ENCODE measurements at regions of chr6 and their contacts with region 1.

Region 1: GRCh38 chr6:159174263-159174969 is 5.2 kb downstream of the FNDC1 start:
- DNase-seq: peak; percentile 41
- H3K4me3 Mint-ChIP-seq: no peak overlapping the region
- H3K27ac Mint-ChIP-seq: no peak overlapping the region
- H3K4me1 Mint-ChIP-seq: peaks cover 5% of the 10 kb centered on the region
- H3K27me3 Mint-ChIP-seq: peaks cover 65% of the 10 kb centered on the region

Region 2: GRCh38 chr6:159252955-159253508 is 78.6 kb after region 1 on chr6:
- intact Hi-C with region 1: no loop called
- DNase-seq: no peak
- H3K4me3 Mint-ChIP-seq: no peak overlapping the region
- H3K27ac Mint-ChIP-seq: no peak overlapping the region
- H3K4me1 Mint-ChIP-seq: no peaks in the 10 kb centered on the region
- H3K27me3 Mint-ChIP-seq: peaks cover 2% of the 10 kb centered on the region

Region 3: DNA sequence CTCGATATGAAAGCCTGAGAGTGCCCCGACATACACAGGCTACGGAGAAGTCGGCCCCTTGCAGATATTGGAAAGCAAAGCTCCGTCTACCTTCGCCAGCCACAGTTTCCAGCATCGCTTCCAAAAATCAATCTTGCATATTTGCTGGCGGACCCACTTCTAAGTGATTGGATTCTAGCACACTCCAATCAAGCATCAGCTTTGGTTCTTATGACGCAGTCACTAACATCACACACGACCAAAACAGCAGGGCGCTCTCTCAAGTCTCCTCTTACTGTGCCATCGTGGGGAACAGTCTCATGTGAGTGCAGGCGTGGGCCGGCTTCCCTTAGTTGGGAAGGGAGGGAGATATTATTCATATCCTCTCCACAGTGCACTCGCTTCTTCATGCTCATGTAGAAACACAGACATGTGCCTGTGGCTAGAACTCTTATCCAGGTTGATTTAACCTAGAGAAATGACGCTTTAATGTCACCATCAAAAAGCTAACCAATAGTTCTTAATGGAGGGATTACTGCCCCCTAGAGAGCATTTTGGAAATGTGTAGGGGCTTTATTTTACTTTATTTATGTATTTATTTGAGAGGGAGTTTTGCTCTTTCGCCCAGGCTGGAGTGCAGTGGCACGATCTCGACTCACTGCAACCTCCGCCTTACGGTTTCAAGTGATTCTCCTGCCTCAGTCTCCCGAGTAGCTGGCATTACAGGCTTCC is 288.9 kb after region 1 on chr6:
- intact Hi-C with region 1: loop called (anchors 1 kb)
- DNase-seq: no peak
- H3K4me3 Mint-ChIP-seq: no peak overlapping the region
- H3K27ac Mint-ChIP-seq: no peak overlapping the region
- H3K4me1 Mint-ChIP-seq: no peaks in the 10 kb centered on the region
- H3K27me3 Mint-ChIP-seq: peaks cover 11% of the 10 kb centered on the region

Region 4: GRCh38 chr6:159654483-159655098 is 480.2 kb after region 1 on chr6:
- intact Hi-C with region 1: loop called (anchors 2 kb)
- DNase-seq: no peak
- H3K4me3 Mint-ChIP-seq: no peak overlapping the region
- H3K27ac Mint-ChIP-seq: no peak overlapping the region
- H3K4me1 Mint-ChIP-seq: no peaks in the 10 kb centered on the region
- H3K27me3 Mint-ChIP-seq: no peaks in the 10 kb centered on the region

Measured in activated T-helper 1 cell treated with anti-CD3 and anti-CD28 coated beads, Interleukin-12 subunit alpha, Interleukin-12 subunit beta, Interleukin-2, Interleukin-4 antibody, amounts not matched to agents 30 ng/mL and 10 ng/mL and 1 ng/mL, durations not matched to agents 14 hours and 24 hours and 36 hours (primary cell).